Activated CD4-positive, alpha-beta T cell treated with anti-CD3 and anti-CD28 coated beads, Interleukin-2, amount 10 ng/mL, durations not matched to agents 7 days and 5 days (primary cell): ENCODE measurements at regions of chr10 and their contacts with region 1.

Region 1: DNA sequence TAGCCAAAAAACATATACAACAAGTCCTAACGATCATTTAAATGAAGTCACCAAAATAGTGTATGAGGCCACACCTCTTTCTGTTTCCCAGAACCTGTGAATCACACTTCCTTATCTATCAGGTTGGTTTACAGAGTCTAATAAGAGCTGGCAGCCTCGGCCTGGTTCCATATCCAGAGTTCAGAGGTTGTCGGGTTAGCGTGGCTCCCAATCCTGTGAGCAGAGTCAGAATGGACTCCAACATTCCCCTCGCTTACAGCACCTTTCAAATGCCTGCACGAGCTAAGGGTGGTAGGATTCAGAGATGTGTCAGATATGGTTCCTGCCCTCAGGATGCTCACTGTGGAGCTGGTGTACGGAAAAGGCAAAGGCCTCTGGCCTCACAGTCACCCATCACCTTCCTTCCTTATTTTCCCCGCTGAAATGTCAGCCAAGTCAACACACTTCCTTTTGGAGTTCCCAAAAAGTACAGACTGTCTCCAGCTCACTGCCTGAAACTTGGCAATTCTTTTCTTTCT is 6.0 kb downstream of the IL15RA start:
- DNase-seq: peak; percentile 15
- H3K4me3 Mint-ChIP-seq: peak overlapping the region; percentile 33
- H3K27ac Mint-ChIP-seq: peak overlapping the region; percentile 78
- H3K4me1 Mint-ChIP-seq: peaks cover 47% of the 10 kb centered on the region
- H3K27me3 Mint-ChIP-seq: no peaks in the 10 kb centered on the region

Region 2: GRCh38 chr10:5915451-5915850 is 55.9 kb before region 1 on chr10:
- CTCF ChIA-PET with region 1: no interaction called
- POLR2A ChIA-PET with region 1: no interaction called
- DNase-seq: no peak
- H3K4me3 Mint-ChIP-seq: no peak overlapping the region
- H3K27ac Mint-ChIP-seq: no peak overlapping the region
- H3K4me1 Mint-ChIP-seq: no peaks in the 10 kb centered on the region
- H3K27me3 Mint-ChIP-seq: no peaks in the 10 kb centered on the region

Region 3: GRCh38 chr10:5953676-5954075 is 17.7 kb before region 1 on chr10:
- CTCF ChIA-PET with region 1: interaction called, 10 read pairs
- POLR2A ChIA-PET with region 1: no interaction called
- DNase-seq: no peak
- H3K4me3 Mint-ChIP-seq: no peak overlapping the region
- H3K27ac Mint-ChIP-seq: peak overlapping the region; percentile 48
- H3K4me1 Mint-ChIP-seq: no peaks in the 10 kb centered on the region
- H3K27me3 Mint-ChIP-seq: no peaks in the 10 kb centered on the region